Activated B cell treated with CpG ODN at 0.5 μM for 24 hours (primary cell): ENCODE measurements at regions of chr19 and their contacts with region 1.

Region 1: DNA sequence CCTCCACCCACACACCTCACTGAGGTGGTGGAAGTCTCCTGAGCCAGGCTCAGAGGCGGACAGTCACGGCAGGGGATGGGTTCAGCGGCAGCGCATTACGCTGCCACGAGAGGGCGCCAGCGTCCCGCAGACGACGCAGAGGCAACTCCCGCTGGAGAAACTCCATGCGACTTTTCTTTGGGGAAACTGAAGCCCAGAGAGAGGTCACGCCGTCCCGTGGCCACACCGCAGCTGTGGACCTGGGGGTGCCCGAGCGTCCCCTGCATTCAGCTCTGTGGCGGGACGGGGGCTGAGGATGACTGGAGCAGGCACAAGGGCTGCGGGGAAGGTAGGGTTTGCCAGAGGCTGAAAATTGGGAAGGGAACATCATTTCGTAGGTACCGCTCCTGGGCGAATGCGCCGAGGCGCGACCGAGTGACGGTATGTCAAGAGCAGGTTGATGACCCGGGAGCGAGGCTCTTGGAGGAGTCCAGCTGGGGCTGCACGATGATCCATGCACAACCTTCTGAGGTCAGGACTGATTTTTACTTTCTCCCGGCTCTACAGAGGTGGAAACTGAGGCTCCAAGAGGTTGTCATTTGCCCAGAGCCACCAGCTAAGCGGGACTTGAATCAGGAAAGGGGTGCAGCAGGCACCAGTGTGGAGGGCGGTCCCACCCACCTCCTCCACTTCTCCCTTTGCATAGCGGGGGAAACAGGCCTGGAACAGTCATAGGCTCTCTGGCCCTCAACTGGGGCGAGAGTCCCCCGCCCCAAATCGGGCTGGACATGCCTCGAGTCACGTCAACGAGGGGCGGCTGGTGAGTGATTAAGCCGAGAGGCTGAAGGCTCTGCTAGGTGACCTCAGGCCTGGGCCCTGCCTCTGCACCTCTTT is 690 bp upstream of the ARRDC2 start:
- DNase-seq: peak; percentile 83
- ATAC-seq: peak; percentile 61
- H3K4me3 Mint-ChIP-seq: peak overlapping the region; percentile 93
- H3K27ac Mint-ChIP-seq: peak overlapping the region; percentile 92
- H3K4me1 Mint-ChIP-seq: peaks cover 40% of the 10 kb centered on the region
- H3K27me3 Mint-ChIP-seq: no peaks in the 10 kb centered on the region
- CTCF ChIP-seq: peak; percentile 84

Region 2: GRCh38 chr19:17847538-17848366 is 159.5 kb before region 1 on chr19 and contains the start of gene JAK3:
- CTCF ChIA-PET with region 1: no interaction called
- POLR2A ChIA-PET with region 1: no interaction called
- intact Hi-C with region 1: no loop called
- DNase-seq: peak; percentile 79
- ATAC-seq: peak; percentile 86
- H3K4me3 Mint-ChIP-seq: peak within 1 kb of the TSS; percentile 94
- H3K27ac Mint-ChIP-seq: peak within 1 kb of the TSS; percentile 96
- H3K4me1 Mint-ChIP-seq: peaks cover 73% of the 10 kb centered on the region
- H3K27me3 Mint-ChIP-seq: no peaks in the 10 kb centered on the region
- CTCF ChIP-seq: no peak
- total RNA-seq, gene JAK3: 213 and 256 TPM in 2 replicates

Region 3: GRCh38 chr19:17985037-17985818 is 22.1 kb before region 1 on chr19:
- CTCF ChIA-PET with region 1: no interaction called
- POLR2A ChIA-PET with region 1: no interaction called
- intact Hi-C with region 1: no loop called
- DNase-seq: no peak
- ATAC-seq: no peak
- H3K4me3 Mint-ChIP-seq: no peak overlapping the region
- H3K27ac Mint-ChIP-seq: no peak overlapping the region
- H3K4me1 Mint-ChIP-seq: peaks cover 8% of the 10 kb centered on the region
- H3K27me3 Mint-ChIP-seq: peaks cover 2% of the 10 kb centered on the region
- CTCF ChIP-seq: no peak

Region 4: GRCh38 chr19:18044825-18045304 is 37.6 kb after region 1 on chr19:
- CTCF ChIA-PET with region 1: interaction called, 16 read pairs
- POLR2A ChIA-PET with region 1: interaction called, 779 read pairs
- intact Hi-C with region 1: loop called (anchors 1 kb)
- DNase-seq: peak; percentile 72
- ATAC-seq: peak; percentile 92
- H3K4me3 Mint-ChIP-seq: peak overlapping the region; percentile 78
- H3K27ac Mint-ChIP-seq: peak overlapping the region; percentile 96
- H3K4me1 Mint-ChIP-seq: peaks cover 55% of the 10 kb centered on the region
- H3K27me3 Mint-ChIP-seq: no peaks in the 10 kb centered on the region
- CTCF ChIP-seq: no peak

Region 5: GRCh38 chr19:18091217-18091608 is 83.9 kb after region 1 on chr19:
- CTCF ChIA-PET with region 1: interaction called, 5 read pairs
- POLR2A ChIA-PET with region 1: interaction called, 14 read pairs
- intact Hi-C with region 1: no loop called
- DNase-seq: peak; percentile 58
- ATAC-seq: peak; percentile 68
- H3K4me3 Mint-ChIP-seq: peak overlapping the region; percentile 67
- H3K27ac Mint-ChIP-seq: peak overlapping the region; percentile 97
- H3K4me1 Mint-ChIP-seq: peaks cover 60% of the 10 kb centered on the region
- H3K27me3 Mint-ChIP-seq: no peaks in the 10 kb centered on the region
- CTCF ChIP-seq: no peak

Region 6: DNA sequence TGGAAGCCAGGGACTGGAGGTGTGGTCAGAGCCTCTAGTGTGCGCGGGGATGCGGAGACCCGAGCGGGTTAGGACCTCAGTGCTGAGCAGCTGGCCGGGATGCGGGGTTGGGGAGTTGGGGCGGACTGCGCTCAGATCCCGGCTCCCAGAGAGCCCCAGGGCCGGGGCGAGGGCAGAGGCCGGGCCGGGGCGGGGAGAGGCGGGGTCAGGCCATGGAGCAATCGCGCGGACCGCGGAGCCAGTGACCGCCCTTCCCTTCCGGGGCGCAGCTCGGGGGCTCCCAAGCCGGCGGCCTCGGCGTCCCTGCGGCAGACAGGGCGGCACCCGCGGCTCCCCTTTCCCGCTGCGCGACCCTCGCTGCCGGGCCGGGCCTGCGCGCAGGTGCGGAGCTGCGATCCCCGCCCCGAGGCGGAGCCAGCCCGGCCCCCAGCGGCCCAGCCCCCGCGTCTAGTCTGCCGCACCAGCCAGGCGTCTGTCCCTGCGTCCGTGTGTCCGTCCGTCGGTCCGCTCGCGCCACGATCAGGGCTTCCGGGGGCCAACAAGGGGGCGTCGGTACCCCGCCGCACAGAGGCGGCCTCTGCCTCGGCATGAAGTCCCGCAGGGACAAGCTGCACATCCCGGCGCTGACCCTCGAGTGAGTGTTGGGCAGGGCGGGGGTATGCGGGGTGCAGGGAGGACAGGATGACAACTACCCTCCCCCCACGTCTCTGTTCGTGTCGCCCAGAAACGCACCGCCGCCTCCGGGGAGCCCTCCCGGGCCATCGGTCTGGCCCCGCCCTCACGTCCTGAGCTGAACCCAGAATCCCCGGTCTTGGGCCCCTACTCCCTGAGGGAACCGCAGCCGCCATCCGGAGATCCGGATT is 102.7 kb after region 1 on chr19:
- CTCF ChIA-PET with region 1: interaction called, 4 read pairs
- POLR2A ChIA-PET with region 1: interaction called, 24 read pairs
- intact Hi-C with region 1: loop called (anchors 1 kb)
- DNase-seq: peak; percentile 62
- ATAC-seq: peak; percentile 57
- H3K4me3 Mint-ChIP-seq: peak overlapping the region; percentile 80
- H3K27ac Mint-ChIP-seq: peak overlapping the region; percentile 83
- H3K4me1 Mint-ChIP-seq: peaks cover 54% of the 10 kb centered on the region
- H3K27me3 Mint-ChIP-seq: no peaks in the 10 kb centered on the region
- CTCF ChIP-seq: no peak